SK-N-SH (cell line): ENCODE measurements at regions of chr1 and their contacts with region 1.

Region 1: DNA sequence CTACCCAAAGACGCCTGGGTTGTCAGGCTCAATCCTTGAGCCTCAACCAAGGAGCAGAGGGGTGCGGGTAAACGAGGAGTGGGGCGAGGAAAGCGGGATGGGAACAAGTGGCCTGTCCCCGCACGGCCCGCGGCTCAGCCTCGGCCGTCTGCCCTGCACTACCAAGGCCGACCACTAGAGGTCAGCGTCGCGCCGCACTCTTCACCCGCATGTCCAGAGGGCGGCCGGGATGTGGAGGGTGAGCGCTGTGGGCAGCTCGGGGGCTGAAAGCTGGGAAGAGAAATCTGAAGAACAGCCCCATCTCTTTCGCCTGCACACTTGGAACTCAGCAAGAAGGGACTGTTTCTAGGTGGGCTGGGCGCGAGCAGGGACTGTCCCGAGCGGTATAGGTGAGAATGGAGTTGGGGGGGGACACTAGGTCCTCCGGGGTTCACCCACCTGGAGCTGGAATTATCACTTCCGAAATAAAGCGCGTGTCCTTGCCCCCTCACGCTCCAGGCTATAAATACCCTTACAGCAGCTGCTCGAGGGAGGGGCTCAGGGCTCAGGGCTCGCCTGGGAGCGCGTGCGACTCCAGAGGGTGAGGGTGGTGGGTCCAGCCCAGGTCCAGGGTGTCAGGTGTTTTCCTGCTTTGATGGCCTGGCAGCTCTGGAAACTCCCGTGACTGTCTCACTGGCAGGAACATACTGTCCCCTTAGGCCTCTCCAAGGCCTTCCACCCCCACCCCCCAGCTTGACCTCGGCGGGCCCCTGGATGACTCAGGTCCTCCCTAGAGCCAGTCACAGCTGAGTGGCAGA is 9.8 kb downstream of the SLC30A2 start:
- DNase-seq: peak; percentile 95
- H3K4me3 ChIP-seq: peak overlapping the region; percentile 87 to 99
- H3K27ac ChIP-seq: peak overlapping the region in 1 of 2 experiments; percentile 69; a peak in 1 of 4 replicates
- H3K4me1 ChIP-seq: peaks cover 0 to 12% of the 10 kb centered on the region in 2 experiments; a peak in 1 of 4 replicates
- H3K27me3 ChIP-seq: peaks cover 5% of the 10 kb centered on the region; the same call in 1 of the 2 replicates
- CTCF ChIP-seq: peak; percentile 95
- EP300 ChIP-seq: no peak
- RAD21 ChIP-seq: peak; percentile 84

Region 2: GRCh38 chr1:25844536-25845337 is 191.4 kb before region 1 on chr1:
- CTCF ChIA-PET with region 1: no interaction called
- POLR2A ChIA-PET with region 1: no interaction called
- DNase-seq: no peak
- H3K4me3 ChIP-seq: no peak overlapping the region
- H3K27ac ChIP-seq: no peak overlapping the region
- H3K4me1 ChIP-seq: no peaks in the 10 kb centered on the region
- H3K27me3 ChIP-seq: no peaks in the 10 kb centered on the region
- CTCF ChIP-seq: no peak
- EP300 ChIP-seq: no peak
- RAD21 ChIP-seq: no peak

Region 3: DNA sequence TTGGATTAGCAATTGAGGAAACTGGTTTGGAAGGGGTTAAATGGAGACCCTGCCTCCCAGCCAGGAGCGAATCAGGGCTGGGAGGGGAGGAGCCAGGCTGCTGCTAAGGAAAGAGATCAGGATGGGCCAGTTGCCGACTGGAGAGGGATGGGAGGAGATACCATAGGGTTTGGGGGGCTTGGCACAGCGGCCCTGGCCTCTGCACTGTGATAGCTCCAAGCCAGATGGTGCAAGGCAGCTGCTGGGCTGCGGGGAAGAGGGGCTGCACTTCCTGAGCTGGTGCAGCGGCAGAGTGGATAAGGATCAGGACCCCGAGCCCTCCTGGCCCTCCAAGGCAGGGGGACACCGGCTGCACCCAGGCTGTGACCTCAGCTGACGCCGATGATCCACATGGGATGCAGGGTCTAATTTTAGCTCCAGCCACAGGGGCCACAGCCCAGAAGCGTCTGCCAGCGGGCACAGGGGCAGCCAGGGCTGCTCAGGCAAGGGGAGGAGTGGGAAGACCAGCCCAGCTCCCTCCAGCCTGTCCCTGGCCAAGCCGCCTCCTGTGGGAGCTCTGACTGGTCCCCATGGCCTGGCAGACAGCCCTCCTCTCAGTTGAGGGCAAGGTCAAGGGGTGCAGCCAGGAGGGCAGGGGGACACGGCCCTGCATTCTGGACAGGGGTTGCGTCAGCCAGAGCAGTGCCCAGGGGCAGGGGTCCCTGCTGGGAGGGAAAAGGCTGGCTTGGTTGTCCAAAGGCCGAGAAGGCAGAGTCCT is 14.3 kb before region 1 on chr1 and contains the start of gene EXTL1:
- CTCF ChIA-PET with region 1: interaction called, 12 read pairs
- POLR2A ChIA-PET with region 1: interaction called, 13 read pairs
- DNase-seq: peak; percentile 96
- H3K4me3 ChIP-seq: peak within 1 kb of the TSS; percentile 48 to 59
- H3K27ac ChIP-seq: peak within 1 kb of the TSS in 1 of 2 experiments; percentile 95; a peak in 2 of 4 replicates
- H3K4me1 ChIP-seq: peaks cover 2 to 43% of the 10 kb centered on the region in 2 experiments; a peak in 2 of 4 replicates
- H3K27me3 ChIP-seq: no peaks in the 10 kb centered on the region
- CTCF ChIP-seq: no peak
- EP300 ChIP-seq: peak in 1 of 2 experiments; percentile 52; a peak in 1 of 4 replicates
- RAD21 ChIP-seq: 0 out of 2 replicates have a peak, but pooled peaks have one; percentile 7
- polyA plus RNA-seq, gene EXTL1: 0.58 and 1.1 TPM in 2 replicates

Region 4: GRCh38 chr1:26053718-26054560 is 17.8 kb after region 1 on chr1:
- CTCF ChIA-PET with region 1: interaction called, 13 read pairs
- POLR2A ChIA-PET with region 1: interaction called, 3 read pairs
- DNase-seq: no peak
- H3K4me3 ChIP-seq: no peak overlapping the region
- H3K27ac ChIP-seq: no peak overlapping the region
- H3K4me1 ChIP-seq: no peaks in the 10 kb centered on the region
- H3K27me3 ChIP-seq: peaks cover 57% of the 10 kb centered on the region; the same call in 1 of the 2 replicates
- CTCF ChIP-seq: no peak
- EP300 ChIP-seq: no peak
- RAD21 ChIP-seq: no peak